Tibial artery (tissue), 4 donors: ENCODE measurements at regions of chr1 and their contacts with region 1.

Region 1: GRCh38 chr1:171644805-171645483 is 7.5 kb downstream of the MYOC start:
- DNase-seq: peak; percentile 85 to 91
- H3K4me3 ChIP-seq: peak overlapping the region in 1 of 2 donors; percentile 7
- H3K27ac ChIP-seq: peak overlapping the region; percentile 74
- H3K4me1 ChIP-seq: peaks cover 0 to 23% (median 15%) of the 10 kb centered on the region in 4 donors
- H3K27me3 ChIP-seq: no peaks in the 10 kb centered on the region
- CTCF ChIP-seq: peak; percentile 84 to 85

Region 2: DNA sequence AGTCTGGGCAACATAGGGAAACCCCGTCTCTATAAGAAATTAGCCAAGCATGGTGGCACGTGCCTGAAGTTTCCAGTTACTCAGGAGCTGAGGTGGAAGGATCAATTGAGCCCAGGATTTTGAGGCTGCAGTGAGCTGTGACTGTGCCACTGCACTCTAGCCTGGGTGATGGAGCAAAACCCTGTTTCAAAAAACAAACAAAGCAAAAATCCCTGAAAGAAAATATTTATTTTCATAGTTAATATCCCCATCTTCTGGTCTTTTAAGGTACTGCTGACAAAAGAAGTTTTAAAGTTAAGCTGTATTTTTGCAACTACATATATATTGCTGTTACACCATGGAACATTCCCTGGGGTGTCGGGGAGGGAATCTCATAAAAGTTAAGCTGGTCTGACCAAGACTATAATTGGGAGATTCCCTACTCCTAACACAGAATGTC is 70.9 kb after region 1 on chr1:
- intact Hi-C with region 1: loop called (anchors 5 kb)
- DNase-seq: no peak
- H3K4me3 ChIP-seq: no peak overlapping the region
- H3K27ac ChIP-seq: peak overlapping the region; percentile 34 to 35
- H3K4me1 ChIP-seq: peaks cover 0 to 26% (median 3%) of the 10 kb centered on the region in 4 donors
- H3K27me3 ChIP-seq: no peaks in the 10 kb centered on the region
- CTCF ChIP-seq: peak; percentile 53 to 69

Region 3: DNA sequence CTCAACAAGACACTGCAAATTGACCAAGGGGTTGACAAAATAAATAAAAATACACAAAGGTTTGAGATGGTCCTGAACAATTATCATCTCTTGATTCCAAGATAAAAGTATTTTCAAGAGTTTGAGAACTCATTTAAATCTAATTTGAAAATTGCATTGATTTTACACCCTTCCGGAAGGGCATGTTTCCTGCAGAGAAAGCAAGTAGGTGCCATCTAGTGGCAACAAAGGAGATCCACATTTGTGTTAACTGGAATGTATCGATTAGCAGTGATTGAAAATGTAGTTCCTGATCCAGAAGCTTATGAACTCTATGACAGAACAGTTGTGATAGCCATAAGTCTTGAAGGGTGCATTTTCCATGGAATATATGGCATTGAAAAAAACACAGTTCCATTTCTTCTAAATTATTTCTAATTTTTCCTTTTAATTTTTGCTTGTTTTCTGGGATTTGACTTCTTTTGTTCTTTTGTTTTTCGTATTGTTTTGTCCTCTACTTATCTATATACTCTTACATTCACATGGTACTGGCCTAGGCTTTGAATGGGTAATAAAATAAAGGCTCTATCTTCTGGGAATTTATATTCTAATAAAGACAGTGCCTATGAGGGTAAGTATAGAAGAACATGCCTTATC is 340.0 kb after region 1 on chr1:
- intact Hi-C with region 1: loop called (anchors 5 kb)
- DNase-seq: no peak
- H3K4me3 ChIP-seq: no peak overlapping the region
- H3K27ac ChIP-seq: no peak overlapping the region
- H3K4me1 ChIP-seq: no peaks in the 10 kb centered on the region
- H3K27me3 ChIP-seq: no peaks in the 10 kb centered on the region
- CTCF ChIP-seq: peak; percentile 68 to 72